ENCODE measurements at regions of chr7 and their contacts with region 1.

Region 1: GRCh38 chr7:102450242-102450641 is 14.4 kb downstream of the ALKBH4 start:
- DNase-seq: no peak
- H3K4me3 ChIP-seq: no peak overlapping the region
- H3K27ac ChIP-seq: no peak overlapping the region
- H3K4me1 ChIP-seq: peaks cover 0 to 3% of the 10 kb centered on the region in 2 donors
- H3K27me3 ChIP-seq: no peaks in the 10 kb centered on the region
- CTCF ChIP-seq: peak in 3 of 6 experiments; percentile 7 to 23 (median 15)
- POLR2A ChIP-seq: no peak

Region 2: GRCh38 chr7:101691822-101692384 is 758.3 kb before region 1 on chr7:
- intact Hi-C with region 1: no loop called
- DNase-seq: no peak
- H3K4me3 ChIP-seq: no peak overlapping the region
- H3K27ac ChIP-seq: no peak overlapping the region
- H3K4me1 ChIP-seq: peaks cover 8 to 11% of the 10 kb centered on the region in 2 donors
- H3K27me3 ChIP-seq: no peaks in the 10 kb centered on the region
- CTCF ChIP-seq: no peak
- POLR2A ChIP-seq: no peak

Region 3: DNA sequence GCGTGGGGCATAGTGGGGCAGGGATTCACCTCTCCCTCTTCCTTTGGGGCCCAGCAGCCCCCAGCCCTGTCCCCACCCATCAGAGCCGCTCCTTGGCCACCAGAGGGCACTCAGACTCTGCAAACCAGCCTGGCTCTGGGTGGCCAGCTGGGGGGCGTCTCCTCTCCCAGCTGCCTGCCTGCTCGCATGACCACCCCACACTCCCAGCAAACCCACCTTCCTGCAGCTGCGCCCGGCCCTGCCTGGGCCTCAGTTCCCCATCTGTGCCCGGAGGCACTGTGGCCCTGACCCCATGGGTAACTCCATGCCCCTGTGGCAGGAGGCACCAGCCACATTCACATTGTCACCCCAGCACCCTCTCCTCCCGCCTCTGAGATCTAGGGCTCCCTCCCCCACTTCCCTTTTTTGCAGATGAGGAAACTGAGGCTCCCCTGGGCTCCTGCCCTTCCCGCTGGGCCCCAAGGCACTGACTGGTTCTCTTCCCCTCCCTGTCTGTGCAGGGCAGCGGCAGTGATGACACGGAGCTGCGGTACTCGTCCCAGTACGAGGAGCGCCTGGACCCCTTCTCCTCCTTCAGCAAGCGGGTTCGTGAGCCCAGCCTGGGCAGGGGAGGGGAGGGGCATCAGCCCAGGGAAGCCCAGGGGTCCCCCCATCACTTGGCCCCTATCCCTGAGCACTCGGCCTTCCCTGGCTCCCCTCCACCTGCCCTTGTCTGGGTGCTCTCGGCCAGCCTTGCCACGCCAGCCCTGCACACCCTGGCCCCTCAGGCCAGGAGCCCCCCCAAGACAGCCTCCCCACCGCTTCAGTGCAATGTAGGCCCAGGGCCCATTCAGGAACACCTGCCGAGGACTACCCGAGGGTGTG is 170.5 kb before region 1 on chr7:
- intact Hi-C with region 1: loop called in 1 of 2 experiments (anchors 10 kb)
- DNase-seq: peak in 4 of 7 donors; percentile 41 to 56 (median 46)
- H3K4me3 ChIP-seq: no peak overlapping the region
- H3K27ac ChIP-seq: no peak overlapping the region
- H3K4me1 ChIP-seq: peaks cover 0 to 5% of the 10 kb centered on the region in 2 donors
- H3K27me3 ChIP-seq: no peaks in the 10 kb centered on the region
- CTCF ChIP-seq: peak; percentile 57 to 89 (median 77)
- POLR2A ChIP-seq: no peak

Region 4: GRCh38 chr7:102291056-102291915 is 159.0 kb before region 1 on chr7:
- intact Hi-C with region 1: loop called (anchors 10 kb)
- DNase-seq: no peak
- H3K4me3 ChIP-seq: no peak overlapping the region
- H3K27ac ChIP-seq: no peak overlapping the region
- H3K4me1 ChIP-seq: peaks cover 14 to 15% of the 10 kb centered on the region in 2 donors
- H3K27me3 ChIP-seq: no peaks in the 10 kb centered on the region
- CTCF ChIP-seq: no peak
- POLR2A ChIP-seq: no peak